ENCODE measurements at regions of chr20 and their contacts with region 1.

Region 1: GRCh38 chr20:36605399-36606157 is at the start of gene RAB5IF:
- DNase-seq: peak; percentile 100
- H3K4me3 Mint-ChIP-seq: peak within 1 kb of the TSS; percentile 98
- H3K27ac Mint-ChIP-seq: peak within 1 kb of the TSS; percentile 95
- H3K4me1 Mint-ChIP-seq: peaks cover 35% of the 10 kb centered on the region
- H3K27me3 Mint-ChIP-seq: no peaks in the 10 kb centered on the region
- total RNA-seq, gene RAB5IF: 92.8 to 94.1 TPM

Region 2: DNA sequence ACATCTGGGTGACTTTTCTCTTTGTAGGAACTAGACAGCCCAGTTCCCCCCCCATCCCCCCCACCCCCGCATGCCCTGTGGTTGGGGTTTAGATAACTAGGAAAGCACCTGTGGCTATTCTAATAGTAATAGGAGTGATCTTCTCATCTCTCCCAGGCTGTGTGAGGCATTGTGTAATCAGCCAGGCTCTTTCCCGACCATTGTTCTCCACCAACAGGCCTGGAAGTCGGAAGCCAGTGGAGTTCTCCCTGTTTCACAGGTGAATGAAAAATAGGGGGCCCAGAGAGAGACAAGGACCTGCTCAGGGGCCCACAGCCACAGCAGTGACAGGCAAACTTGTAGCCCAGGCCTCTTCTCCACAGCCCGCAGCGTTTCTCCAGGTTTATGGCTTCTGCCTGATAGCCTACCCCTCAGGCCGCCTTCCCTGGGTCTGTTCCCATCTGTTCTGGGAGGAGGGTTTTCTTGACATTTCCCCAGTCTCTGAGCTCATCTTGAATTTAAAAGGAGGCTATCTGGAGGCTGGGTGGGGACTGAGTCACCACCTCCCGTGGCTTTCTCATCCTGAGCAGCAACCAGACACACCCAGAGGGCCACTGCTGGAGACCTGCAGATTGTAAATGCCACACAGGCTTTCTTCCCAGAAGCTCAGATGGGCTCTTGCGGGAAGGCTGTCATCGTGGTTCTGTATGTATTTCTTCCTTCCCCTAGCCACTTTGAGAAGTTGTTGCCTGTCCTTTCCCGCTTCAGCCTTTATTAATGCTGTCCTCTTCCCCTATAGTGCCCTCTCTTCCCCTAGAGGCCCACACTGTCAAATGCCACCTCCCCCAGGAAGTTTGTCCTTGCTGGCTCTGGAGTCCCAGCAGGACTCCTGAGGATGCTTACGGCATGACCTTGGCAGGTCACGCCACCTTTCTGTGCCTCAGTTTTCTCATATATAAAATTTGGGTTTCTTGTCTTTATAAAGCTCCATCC is 140.2 kb before region 1 on chr20:
- CTCF ChIA-PET with region 1: interaction called, 21 read pairs
- POLR2A ChIA-PET with region 1: interaction called, 8 read pairs
- DNase-seq: peak; percentile 63
- H3K4me3 Mint-ChIP-seq: peak overlapping the region; percentile 64
- H3K27ac Mint-ChIP-seq: peak overlapping the region; percentile 94
- H3K4me1 Mint-ChIP-seq: peaks cover 78% of the 10 kb centered on the region
- H3K27me3 Mint-ChIP-seq: no peaks in the 10 kb centered on the region

Region 3: DNA sequence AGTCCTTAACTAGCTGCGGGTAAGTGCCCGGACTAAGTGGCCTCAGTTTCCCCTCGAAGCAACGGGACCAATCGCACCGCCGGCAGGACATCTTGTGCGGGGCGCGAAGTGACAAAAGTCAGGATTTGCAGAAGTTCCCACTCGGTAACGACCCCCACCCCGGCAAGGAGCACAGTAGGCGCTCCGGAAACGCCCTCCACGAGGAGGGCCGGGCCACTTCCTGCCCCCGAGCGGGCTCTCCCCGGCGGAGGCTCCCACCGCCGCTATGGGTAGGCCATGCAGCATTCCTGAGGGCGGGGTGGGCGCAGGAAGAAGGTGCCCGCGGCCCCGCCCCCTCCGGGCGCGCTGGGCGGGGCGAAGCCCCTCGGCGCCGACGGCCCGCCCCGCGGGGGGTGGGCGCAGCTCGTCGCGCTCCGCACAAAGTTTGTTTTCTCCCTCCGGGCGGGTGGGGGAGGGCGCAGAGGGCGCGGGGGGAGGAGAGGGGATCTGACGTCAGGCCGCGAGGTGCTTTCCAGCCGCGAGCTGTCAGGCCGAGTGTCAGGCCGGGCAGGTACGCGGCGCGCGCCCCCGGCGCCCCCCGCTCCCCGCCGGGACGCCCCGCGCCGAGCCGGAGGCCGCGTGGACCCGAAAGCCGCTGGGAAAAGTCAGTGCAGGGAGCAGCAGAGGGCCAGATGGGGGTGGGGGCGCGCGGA is 32.3 kb before region 1 on chr20 and contains the start of gene TGIF2:
- CTCF ChIA-PET with region 1: interaction called, 18 read pairs
- POLR2A ChIA-PET with region 1: interaction called, 113 read pairs
- DNase-seq: peak; percentile 86
- H3K4me3 Mint-ChIP-seq: peak within 1 kb of the TSS; percentile 92
- H3K27ac Mint-ChIP-seq: peak within 1 kb of the TSS; percentile 87
- H3K4me1 Mint-ChIP-seq: peaks cover 34% of the 10 kb centered on the region
- H3K27me3 Mint-ChIP-seq: no peaks in the 10 kb centered on the region
- total RNA-seq, gene TGIF2: 28.0 to 33.5 TPM

Region 4: GRCh38 chr20:36585463-36586108 is 20.0 kb before region 1 on chr20:
- CTCF ChIA-PET with region 1: interaction called, 58 read pairs
- POLR2A ChIA-PET with region 1: interaction called, 46 read pairs
- DNase-seq: no peak
- H3K4me3 Mint-ChIP-seq: no peak overlapping the region
- H3K27ac Mint-ChIP-seq: no peak overlapping the region
- H3K4me1 Mint-ChIP-seq: peaks cover 40% of the 10 kb centered on the region
- H3K27me3 Mint-ChIP-seq: no peaks in the 10 kb centered on the region

Region 5: GRCh38 chr20:36645998-36646397 is 40.4 kb after region 1 on chr20 and contains the start of gene SLA2:
- CTCF ChIA-PET with region 1: interaction called, 7 read pairs
- POLR2A ChIA-PET with region 1: interaction called, 67 read pairs
- DNase-seq: peak; percentile 82
- H3K4me3 Mint-ChIP-seq: peak within 1 kb of the TSS; percentile 96
- H3K27ac Mint-ChIP-seq: peak within 1 kb of the TSS; percentile 97
- H3K4me1 Mint-ChIP-seq: peaks cover 49% of the 10 kb centered on the region
- H3K27me3 Mint-ChIP-seq: no peaks in the 10 kb centered on the region
- total RNA-seq, gene SLA2: 78.6 to 79.9 TPM

Region 6: GRCh38 chr20:36754656-36755222 is 149.2 kb after region 1 on chr20:
- CTCF ChIA-PET with region 1: interaction called, 13 read pairs
- POLR2A ChIA-PET with region 1: interaction called, 5 read pairs
- DNase-seq: peak; percentile 47
- H3K4me3 Mint-ChIP-seq: no peak overlapping the region
- H3K27ac Mint-ChIP-seq: no peak overlapping the region
- H3K4me1 Mint-ChIP-seq: peaks cover 15% of the 10 kb centered on the region
- H3K27me3 Mint-ChIP-seq: no peaks in the 10 kb centered on the region

Measured in activated CD4-positive, alpha-beta memory T cell treated with anti-CD3 and anti-CD28 coated beads, Interleukin-2, amount 10 ng/mL, durations not matched to agents 7 days and 5 days (primary cell).